Activated T-helper 2 cell treated with anti-CD3 and anti-CD28 coated beads, Interferon-gamma antibody, Interleukin-2, Interleukin-4, amounts not matched to agents 10 μg/mL and 5 μg/mL and 100 μg/mL, durations not matched to agents 14 hours and 24 hours and 36 hours (primary cell): ENCODE measurements at regions of chr4 and their contacts with region 1.

Region 1: DNA sequence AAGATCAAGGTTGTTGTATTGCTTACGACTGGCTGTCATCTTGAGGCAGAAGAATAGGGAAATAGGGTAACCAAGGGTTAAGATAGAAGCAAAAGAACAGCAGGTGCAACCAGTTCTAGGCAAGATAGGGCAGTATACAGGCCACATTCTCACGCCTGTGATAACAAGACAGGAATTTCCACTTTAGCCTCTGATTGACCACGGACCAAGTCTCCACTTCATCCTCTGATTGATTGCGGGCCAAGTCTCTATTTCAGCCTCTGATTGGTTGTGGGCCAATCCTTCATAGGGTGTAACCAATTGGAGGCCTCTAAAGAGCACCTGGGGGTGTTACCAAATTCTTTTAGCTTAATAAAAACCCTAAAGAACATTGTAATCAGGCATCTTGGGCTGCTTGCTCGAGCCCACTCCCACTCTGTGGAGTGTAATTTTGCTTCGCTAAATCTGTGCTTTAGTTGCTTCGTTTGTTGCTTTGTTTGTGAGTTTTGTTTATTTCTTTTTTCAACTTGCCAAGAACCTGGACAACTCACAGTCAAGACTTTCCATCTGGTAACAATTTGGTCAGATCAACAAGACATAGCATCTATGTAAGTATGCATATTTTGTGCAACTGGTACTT is 8.7 kb upstream of the TBC1D9 start:
- DNase-seq: no peak
- H3K4me3 Mint-ChIP-seq: no peak overlapping the region
- H3K27ac Mint-ChIP-seq: no peak overlapping the region
- H3K4me1 Mint-ChIP-seq: no peaks in the 10 kb centered on the region
- H3K27me3 Mint-ChIP-seq: peaks cover 18% of the 10 kb centered on the region

Region 2: DNA sequence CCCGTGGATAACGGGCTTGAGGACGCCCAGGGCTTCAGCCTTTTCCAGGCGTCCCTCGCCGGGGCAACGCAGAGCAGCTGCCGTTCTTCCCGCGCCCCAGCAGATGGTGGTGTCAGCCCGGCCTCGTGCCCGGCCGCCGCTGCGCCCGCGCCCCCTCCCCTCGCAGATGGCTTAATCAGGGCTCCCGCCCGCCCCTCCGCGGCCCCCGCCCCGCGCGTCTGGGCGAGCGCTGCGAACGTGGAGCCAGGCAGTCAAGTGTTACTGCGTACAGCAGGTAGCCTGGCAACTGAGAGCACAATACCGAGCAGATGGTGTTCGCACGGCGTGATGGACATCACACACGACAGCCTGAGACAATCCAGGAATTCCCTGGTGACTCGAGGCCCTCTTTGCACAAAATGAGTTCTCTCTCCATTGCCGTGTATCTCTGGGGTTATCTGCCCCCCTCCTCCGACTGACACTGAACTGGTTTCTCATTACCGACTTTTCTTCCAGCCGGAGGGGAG is 1030.0 kb before region 1 on chr4:
- intact Hi-C with region 1: no loop called
- DNase-seq: peak; percentile 35
- H3K4me3 Mint-ChIP-seq: peak overlapping the region; percentile 49
- H3K27ac Mint-ChIP-seq: no peak overlapping the region
- H3K4me1 Mint-ChIP-seq: peaks cover 11% of the 10 kb centered on the region
- H3K27me3 Mint-ChIP-seq: peaks cover 54% of the 10 kb centered on the region

Region 3: GRCh38 chr4:140750470-140750869 is 14.4 kb before region 1 on chr4:
- intact Hi-C with region 1: loop called (anchors 1 kb)
- DNase-seq: no peak
- H3K4me3 Mint-ChIP-seq: no peak overlapping the region
- H3K27ac Mint-ChIP-seq: no peak overlapping the region
- H3K4me1 Mint-ChIP-seq: peaks cover 1% of the 10 kb centered on the region
- H3K27me3 Mint-ChIP-seq: peaks cover 45% of the 10 kb centered on the region